Gastrocnemius medialis (tissue), 4 donors: ENCODE measurements at regions of chr19 and their contacts with region 1.

Region 1: DNA sequence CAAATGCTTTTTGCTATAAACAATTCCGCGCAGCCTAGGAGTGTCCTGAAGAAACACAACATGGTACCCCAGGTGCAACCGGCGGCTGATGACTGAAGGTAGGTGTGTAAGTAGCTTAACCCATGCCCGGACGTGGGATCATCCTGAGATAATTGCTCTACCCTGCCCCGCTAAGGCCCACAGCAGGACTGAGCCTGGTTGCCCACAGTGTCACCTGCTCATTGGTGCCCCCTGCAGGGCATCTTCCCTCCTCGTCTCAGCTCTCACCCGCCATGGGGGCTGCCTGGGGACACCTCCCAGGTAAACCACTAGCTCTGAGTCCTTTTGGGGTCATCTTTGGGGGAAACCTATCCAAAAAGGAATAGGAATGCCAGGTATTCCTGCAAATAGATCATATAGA is 22.3 kb downstream of the TMEM161A start:
- DNase-seq: peak in 1 of 2 donors; percentile 44
- ATAC-seq: peak in 1 of 2 donors; percentile 60
- H3K4me3 ChIP-seq: no peak overlapping the region
- H3K27ac ChIP-seq: no peak overlapping the region
- H3K4me1 ChIP-seq: no peaks in the 10 kb centered on the region
- H3K27me3 ChIP-seq: no peaks in the 10 kb centered on the region
- CTCF ChIP-seq: peak; percentile 30 to 67 (median 48)
- POLR2A ChIP-seq: no peak

Region 2: GRCh38 chr19:19053508-19054314 is 62.2 kb before region 1 on chr19:
- in situ Hi-C with region 1: no loop called
- intact Hi-C with region 1: loop called (anchors 1 kb)
- DNase-seq: peak in 1 of 2 donors; percentile 71
- ATAC-seq: peak; percentile 77 to 82
- H3K4me3 ChIP-seq: no peak overlapping the region
- H3K27ac ChIP-seq: no peak overlapping the region
- H3K4me1 ChIP-seq: peaks cover under 1 to 3% of the 10 kb centered on the region in 2 donors
- H3K27me3 ChIP-seq: no peaks in the 10 kb centered on the region
- CTCF ChIP-seq: peak; percentile 79 to 93 (median 91)
- POLR2A ChIP-seq: no peak

Region 3: GRCh38 chr19:19134687-19135158 is 18.8 kb after region 1 on chr19:
- in situ Hi-C with region 1: no loop called
- intact Hi-C with region 1: no loop called
- DNase-seq: peak in 1 of 2 donors; percentile 72
- ATAC-seq: peak in 1 of 2 donors; percentile 18
- H3K4me3 ChIP-seq: peak overlapping the region in 1 of 4 donors; percentile 5
- H3K27ac ChIP-seq: peak overlapping the region in 3 of 4 donors; percentile 24 to 98 (median 96)
- H3K4me1 ChIP-seq: peaks cover 7 to 14% of the 10 kb centered on the region in 2 donors
- H3K27me3 ChIP-seq: no peaks in the 10 kb centered on the region
- CTCF ChIP-seq: peak in 2 of 5 experiments; percentile 29 to 40
- POLR2A ChIP-seq: peak; percentile 49 to 69